ENCODE measurements at regions of chr19 and their contacts with region 1.

Region 1: GRCh38 chr19:3132971-3133792 is 2.7 kb upstream of the GNA15 start:
- DNase-seq: peak; percentile 94
- ATAC-seq: peak; percentile 93
- H3K4me3 Mint-ChIP-seq: peak overlapping the region; percentile 57
- H3K27ac Mint-ChIP-seq: peak overlapping the region; percentile 94
- H3K4me1 Mint-ChIP-seq: peaks cover 50% of the 10 kb centered on the region
- H3K27me3 Mint-ChIP-seq: peaks cover 2% of the 10 kb centered on the region

Region 2: DNA sequence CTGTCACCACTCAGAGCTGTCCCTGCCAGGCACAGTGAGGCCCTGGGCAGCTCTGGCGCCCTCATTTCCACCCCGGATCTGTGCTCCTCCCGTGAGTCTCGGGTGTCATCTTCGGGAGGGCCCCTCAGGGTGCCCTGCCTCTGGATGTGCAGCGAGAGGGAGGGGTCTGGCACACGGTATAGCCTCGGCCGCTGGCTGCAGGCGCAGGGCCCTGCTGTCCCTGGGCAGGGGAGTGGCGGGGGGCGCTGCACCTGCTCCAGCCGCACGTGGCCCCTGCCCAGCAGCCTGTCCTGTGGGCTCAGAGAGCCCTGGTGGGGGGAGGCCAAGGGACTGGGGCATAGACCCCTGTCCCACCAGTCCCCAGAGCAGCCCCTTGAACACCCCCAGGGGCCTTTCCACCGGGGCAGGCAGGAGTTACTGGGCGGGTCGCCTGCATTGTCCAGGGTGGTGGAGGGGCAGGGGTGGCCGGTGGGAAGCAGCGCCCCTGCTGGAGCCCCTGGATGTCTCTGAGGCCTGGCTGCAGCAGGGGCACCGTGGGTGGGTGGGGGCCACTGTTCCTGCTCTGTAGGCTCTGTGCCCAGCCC is 13.1 kb before region 1 on chr19:
- CTCF ChIA-PET with region 1: no interaction called
- DNase-seq: no peak
- ATAC-seq: no peak
- H3K4me3 Mint-ChIP-seq: no peak overlapping the region
- H3K27ac Mint-ChIP-seq: no peak overlapping the region
- H3K4me1 Mint-ChIP-seq: peaks cover under 1% of the 10 kb centered on the region
- H3K27me3 Mint-ChIP-seq: no peaks in the 10 kb centered on the region

Region 3: GRCh38 chr19:3146677-3147100 is 13.5 kb after region 1 on chr19:
- CTCF ChIA-PET with region 1: interaction called, 100 read pairs
- DNase-seq: peak; percentile 68
- ATAC-seq: peak; percentile 69
- H3K4me3 Mint-ChIP-seq: no peak overlapping the region
- H3K27ac Mint-ChIP-seq: peak overlapping the region; percentile 43
- H3K4me1 Mint-ChIP-seq: peaks cover 26% of the 10 kb centered on the region
- H3K27me3 Mint-ChIP-seq: no peaks in the 10 kb centered on the region

Region 4: GRCh38 chr19:3151563-3152430 is 18.6 kb after region 1 on chr19:
- CTCF ChIA-PET with region 1: interaction called, 100 read pairs
- DNase-seq: no peak
- ATAC-seq: no peak
- H3K4me3 Mint-ChIP-seq: no peak overlapping the region
- H3K27ac Mint-ChIP-seq: no peak overlapping the region
- H3K4me1 Mint-ChIP-seq: peaks cover 7% of the 10 kb centered on the region
- H3K27me3 Mint-ChIP-seq: no peaks in the 10 kb centered on the region

Region 5: DNA sequence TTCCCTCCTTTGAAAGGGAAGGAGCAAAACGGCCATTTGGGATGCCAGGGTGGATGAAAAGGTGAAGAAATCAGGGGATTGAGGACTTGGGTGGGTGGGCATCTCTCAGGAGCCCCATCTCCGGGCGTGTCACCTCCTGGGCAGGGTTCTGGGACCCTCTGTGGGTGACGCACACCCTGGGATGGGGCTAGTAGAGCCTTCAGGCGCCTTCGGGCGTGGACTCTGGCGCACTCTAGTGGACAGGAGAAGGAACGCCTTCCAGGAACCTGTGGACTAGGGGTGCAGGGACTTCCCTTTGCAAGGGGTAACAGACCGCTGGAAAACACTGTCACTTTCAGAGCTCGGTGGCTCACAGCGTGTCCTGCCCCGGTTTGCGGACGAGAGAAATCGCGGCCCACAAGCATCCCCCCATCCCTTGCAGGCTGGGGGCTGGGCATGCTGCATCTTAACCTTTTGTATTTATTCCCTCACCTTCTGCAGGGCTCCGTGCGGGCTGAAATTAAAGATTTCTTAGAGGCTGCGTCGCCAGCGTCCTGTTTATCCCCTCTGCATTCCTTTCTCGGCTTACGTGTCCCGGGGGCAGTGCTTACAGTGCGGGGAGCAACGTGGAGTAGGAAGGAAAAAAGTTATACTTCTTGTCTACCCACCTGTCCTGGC is 30.2 kb after region 1 on chr19:
- CTCF ChIA-PET with region 1: interaction called, 28 read pairs
- DNase-seq: peak; percentile 82
- ATAC-seq: peak; percentile 90
- H3K4me3 Mint-ChIP-seq: no peak overlapping the region
- H3K27ac Mint-ChIP-seq: peak overlapping the region; percentile 46
- H3K4me1 Mint-ChIP-seq: peaks cover 45% of the 10 kb centered on the region
- H3K27me3 Mint-ChIP-seq: no peaks in the 10 kb centered on the region